Left ventricle myocardium superior (tissue), 1 donor: ENCODE measurements at regions of chr17 and their contacts with region 1.

Region 1: GRCh38 chr17:63672573-63673531 is 27.1 kb downstream of the LIMD2 start:
- DNase-seq: no peak
- ATAC-seq: no peak

Region 2: GRCh38 chr17:63629627-63630026 is 43.2 kb before region 1 on chr17:
- intact Hi-C with region 1: loop called (anchors 2 kb)
- DNase-seq: no peak
- ATAC-seq: peak; percentile 68